ENCODE measurements at regions of chr19 and their contacts with region 1.

Region 1: GRCh38 chr19:18662972-18663732 is 20.3 kb upstream of the CRTC1 start:
- DNase-seq: no peak
- H3K4me3 ChIP-seq: no peak overlapping the region
- H3K27ac ChIP-seq: no peak overlapping the region
- H3K4me1 ChIP-seq: no peaks in the 10 kb centered on the region
- H3K27me3 ChIP-seq: no peaks in the 10 kb centered on the region
- CTCF ChIP-seq: no peak

Region 2: GRCh38 chr19:18700501-18701249 is 37.5 kb after region 1 on chr19:
- CTCF ChIA-PET with region 1: no interaction called
- POLR2A ChIA-PET with region 1: no interaction called
- intact Hi-C with region 1: no loop called
- DNase-seq: peak; percentile 94
- H3K4me3 ChIP-seq: peak overlapping the region; percentile 34
- H3K27ac ChIP-seq: no peak overlapping the region
- H3K4me1 ChIP-seq: peaks cover 22% of the 10 kb centered on the region
- H3K27me3 ChIP-seq: no peaks in the 10 kb centered on the region
- CTCF ChIP-seq: no peak

Region 3: DNA sequence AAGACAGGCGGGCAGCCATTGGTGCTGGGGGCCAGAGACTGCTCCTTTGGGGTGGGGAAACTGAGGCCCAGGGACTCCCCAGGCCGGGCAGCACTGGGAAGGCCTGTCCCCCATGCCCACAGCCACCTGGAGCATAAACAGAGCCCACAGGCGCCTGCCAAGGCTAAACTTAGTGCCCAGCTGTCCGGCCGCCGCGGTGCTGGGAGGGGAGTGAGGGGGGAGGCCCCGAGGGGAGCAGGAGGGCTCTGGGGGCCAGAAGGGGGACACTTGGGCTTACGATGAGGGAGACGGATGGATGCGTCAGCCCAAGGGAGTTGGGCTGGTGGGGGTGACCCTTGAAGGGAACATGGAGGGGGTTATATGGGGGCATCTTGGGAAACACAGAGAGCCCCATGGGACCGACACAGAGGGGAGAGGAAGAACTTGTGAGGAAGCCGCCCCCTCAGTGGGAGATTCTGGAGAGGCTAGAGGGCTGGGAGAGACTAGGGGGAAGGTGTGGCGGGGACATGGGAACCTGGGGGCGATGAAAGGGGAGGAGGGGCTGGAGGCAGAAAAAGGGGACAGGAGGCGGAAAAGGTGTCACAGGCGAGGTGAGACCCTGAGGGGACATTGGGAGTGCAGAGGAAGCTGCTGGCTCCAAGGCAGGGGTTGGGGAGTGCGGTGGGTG is 230.6 kb after region 1 on chr19:
- CTCF ChIA-PET with region 1: no interaction called
- POLR2A ChIA-PET with region 1: no interaction called
- intact Hi-C with region 1: no loop called
- DNase-seq: no peak
- H3K4me3 ChIP-seq: no peak overlapping the region
- H3K27ac ChIP-seq: no peak overlapping the region
- H3K4me1 ChIP-seq: peaks cover 10% of the 10 kb centered on the region
- H3K27me3 ChIP-seq: no peaks in the 10 kb centered on the region
- CTCF ChIP-seq: no peak

Region 4: GRCh38 chr19:19366612-19367396 is 703.7 kb after region 1 on chr19:
- CTCF ChIA-PET with region 1: interaction called, 13 read pairs
- POLR2A ChIA-PET with region 1: no interaction called
- intact Hi-C with region 1: no loop called
- DNase-seq: peak; percentile 87
- H3K4me3 ChIP-seq: no peak overlapping the region
- H3K27ac ChIP-seq: peak overlapping the region; percentile 47
- H3K4me1 ChIP-seq: peaks cover 11% of the 10 kb centered on the region
- H3K27me3 ChIP-seq: no peaks in the 10 kb centered on the region
- CTCF ChIP-seq: peak; percentile 92